ENCODE measurements at regions of chr1 and their contacts with region 1.

Region 1: DNA sequence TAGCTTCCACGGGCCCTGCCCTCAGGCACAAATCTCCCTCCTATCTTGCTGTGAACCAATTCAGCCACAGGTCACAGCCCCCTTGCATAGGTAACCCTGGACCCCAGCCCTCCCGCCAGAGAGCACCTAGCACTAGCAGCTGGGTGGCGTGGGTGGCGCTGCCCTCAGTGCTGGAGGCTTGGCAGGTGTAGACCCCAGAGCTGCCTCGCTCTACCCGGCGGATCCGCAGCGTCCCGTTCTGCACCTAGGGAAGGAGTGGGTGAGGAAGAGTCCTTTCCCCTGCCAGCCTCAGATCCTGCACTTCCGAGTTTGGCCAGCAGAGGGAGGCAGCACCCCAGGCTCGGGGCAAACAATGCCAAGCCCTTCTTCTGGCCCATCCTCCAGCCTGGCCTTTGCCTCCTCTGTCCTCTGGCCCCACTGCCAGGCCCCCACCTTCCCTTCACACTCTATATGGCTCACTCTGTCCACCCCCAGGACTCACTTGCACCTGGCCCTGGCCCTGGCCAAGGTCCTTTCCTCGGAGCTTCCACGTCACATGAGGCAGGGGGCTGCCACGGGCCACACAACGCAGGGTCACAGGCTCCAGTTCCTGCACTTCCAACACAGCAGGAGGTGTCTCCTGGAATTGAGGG is 9.0 kb downstream of the IGSF9 start:
- DNase-seq: peak; percentile 79
- ATAC-seq: peak; percentile 87 to 91
- H3K4me3 ChIP-seq: no peak overlapping the region
- H3K27ac ChIP-seq: no peak overlapping the region
- H3K4me1 ChIP-seq: peaks cover 17% of the 10 kb centered on the region
- H3K27me3 ChIP-seq: no peaks in the 10 kb centered on the region
- CTCF ChIP-seq: peak; percentile 99

Region 2: DNA sequence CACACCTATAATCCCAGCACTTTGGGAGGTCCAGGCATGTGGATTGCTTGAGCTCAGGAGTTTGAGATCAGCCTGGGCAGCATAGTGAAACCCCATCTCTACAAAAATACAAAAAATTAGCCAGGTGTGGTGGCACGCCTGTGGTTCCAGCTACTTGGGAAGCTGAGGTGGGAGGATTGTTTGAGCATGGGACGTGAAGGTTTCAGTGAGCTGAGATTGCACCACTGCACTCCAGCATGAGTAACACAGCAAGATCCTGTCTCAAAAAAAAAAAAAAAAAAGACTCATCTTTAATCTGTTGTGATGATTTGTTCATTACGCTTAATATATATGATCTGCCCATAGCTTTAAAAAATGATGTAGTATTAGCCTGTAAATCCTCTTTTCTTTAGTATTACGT is 452.9 kb before region 1 on chr1:
- intact Hi-C with region 1: no loop called
- DNase-seq: no peak
- ATAC-seq: no peak
- H3K4me3 ChIP-seq: no peak overlapping the region
- H3K27ac ChIP-seq: no peak overlapping the region
- H3K4me1 ChIP-seq: no peaks in the 10 kb centered on the region
- H3K27me3 ChIP-seq: no peaks in the 10 kb centered on the region
- CTCF ChIP-seq: no peak

Region 3: DNA sequence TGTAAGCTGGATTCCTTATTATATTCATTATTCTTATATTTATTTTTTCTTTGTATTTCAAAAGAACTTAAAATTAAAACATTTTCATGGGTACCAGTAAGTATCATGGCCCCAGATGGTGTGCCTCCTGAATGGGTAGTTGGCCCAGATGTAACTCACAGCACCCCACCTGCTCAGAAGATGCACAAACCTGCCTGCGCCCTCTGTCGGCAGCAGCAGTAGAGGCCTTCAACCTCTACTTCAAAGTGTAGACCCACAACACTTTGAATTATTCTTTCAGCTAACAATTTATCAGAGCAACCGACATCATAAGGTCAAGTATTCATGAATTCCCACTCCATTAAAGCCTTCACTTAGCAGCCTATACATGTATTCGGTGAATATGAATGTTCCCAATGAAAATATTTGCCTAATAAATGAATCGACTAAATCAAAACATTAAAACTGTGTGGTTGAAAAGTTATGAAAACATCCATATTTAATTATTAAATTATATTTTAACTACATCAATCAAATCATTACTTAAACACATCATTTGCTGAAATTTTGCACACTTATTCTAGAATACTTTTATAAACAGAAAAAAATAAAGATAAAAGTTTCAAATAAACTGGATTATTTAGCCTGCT is 70.0 kb after region 1 on chr1:
- intact Hi-C with region 1: loop called (anchors 5 kb)
- DNase-seq: peak; percentile 86
- ATAC-seq: peak; percentile 88 to 93
- H3K4me3 ChIP-seq: no peak overlapping the region
- H3K27ac ChIP-seq: no peak overlapping the region
- H3K4me1 ChIP-seq: no peaks in the 10 kb centered on the region
- H3K27me3 ChIP-seq: no peaks in the 10 kb centered on the region
- CTCF ChIP-seq: peak; percentile 87

Measured in lower lobe of right lung (tissue), 2 donors.